BJ (cell line): ENCODE measurements at regions of chr9 and their contacts with region 1.

Region 1: DNA sequence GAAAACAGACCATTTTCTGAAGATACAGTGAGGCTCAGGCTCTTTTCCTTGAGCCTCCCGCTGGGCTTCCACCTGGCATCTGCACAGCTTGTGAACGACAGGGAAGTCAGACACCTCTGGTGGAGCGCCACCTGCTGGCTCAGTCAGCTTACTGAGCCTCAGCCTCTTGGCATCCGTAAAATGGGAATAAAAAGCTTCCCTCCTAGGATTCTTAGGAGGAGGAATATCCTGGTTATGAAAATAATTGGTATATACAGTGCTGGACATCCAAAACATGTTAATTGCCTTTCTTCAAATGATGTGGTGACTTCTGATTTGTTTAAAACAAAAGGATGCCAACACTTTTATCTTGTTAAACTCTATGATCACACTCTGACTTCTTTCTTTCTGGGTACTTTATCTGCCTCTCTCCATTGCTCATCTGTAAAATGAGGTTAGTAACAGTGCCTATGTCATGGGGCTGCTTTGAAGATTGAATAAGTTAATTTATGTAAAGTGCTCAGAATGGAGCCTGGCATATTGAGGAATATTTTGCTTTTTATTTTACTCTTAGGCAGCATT is 67.5 kb downstream of the MAMDC2 start:
- DNase-seq: no peak
- H3K4me3 ChIP-seq: no peak overlapping the region
- H3K27me3 ChIP-seq: no peaks in the 10 kb centered on the region
- CTCF ChIP-seq: peak; percentile 91

Region 2: DNA sequence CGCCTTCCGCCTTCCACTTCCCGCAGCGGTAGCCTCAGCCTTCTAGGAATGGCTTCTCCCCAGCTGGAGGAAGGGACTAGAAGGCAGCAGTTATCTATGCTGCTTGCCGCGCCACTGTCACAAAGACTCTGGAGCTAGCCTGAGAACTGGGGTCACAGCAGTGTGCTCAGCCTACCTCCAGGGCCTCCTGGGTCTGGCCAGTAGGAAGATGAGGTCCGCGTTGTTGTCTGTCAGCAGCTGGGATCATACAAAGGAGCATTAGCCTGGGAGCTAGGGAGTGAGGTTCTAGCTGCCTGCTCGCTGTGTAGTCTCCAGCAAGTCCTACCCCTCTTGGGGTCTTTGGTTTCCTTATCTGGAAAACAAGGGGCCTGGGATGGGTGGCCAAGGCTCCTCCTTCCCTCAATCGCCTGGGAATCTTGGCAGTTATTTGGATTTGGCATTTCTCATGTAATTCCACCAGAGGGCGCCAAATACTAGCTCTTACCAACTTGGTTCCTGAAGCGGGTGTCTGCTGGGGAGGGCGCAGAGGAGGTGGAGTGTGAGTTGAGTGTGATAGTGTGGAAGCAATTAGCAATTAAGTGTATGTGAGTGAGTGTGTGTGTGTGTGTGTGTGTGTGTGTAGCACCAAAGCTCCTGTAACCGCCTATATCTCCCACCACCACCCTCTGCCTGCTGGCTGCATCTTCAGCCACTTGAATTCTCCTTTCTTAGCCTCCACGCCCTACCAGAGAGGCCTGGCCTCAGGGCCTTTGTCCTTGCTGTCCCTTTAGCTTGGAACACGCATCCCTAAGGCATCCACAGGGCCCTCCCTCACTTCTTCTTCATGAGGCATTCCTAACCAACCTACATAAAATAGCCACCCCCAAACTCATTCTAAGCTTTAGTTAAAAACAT is 689.0 kb before region 1 on chr9:
- CTCF ChIA-PET with region 1: interaction called, 10 read pairs
- POLR2A ChIA-PET with region 1: no interaction called
- DNase-seq: peak; percentile 5
- H3K4me3 ChIP-seq: no peak overlapping the region
- H3K27me3 ChIP-seq: no peaks in the 10 kb centered on the region
- CTCF ChIP-seq: peak; percentile 65

Region 3: DNA sequence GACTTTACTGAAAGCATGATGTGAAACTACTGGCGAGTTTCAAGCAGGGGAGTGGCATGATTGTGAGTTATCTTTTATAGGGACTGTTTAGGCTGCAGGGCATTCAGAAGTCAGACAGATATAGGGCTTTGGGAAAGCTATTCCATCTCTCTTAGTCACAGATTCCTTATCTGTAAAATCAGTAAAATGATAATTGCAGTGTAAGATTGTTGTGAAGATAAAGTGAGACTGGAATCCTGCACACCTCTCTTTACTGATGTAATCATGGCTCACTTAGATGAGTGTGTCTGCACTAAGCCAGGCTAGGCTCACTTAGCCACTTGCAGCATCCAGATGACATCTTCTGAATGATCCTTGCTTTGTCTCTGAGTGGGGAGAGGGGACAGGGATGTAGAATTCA is 149.3 kb before region 1 on chr9:
- CTCF ChIA-PET with region 1: interaction called, 107 read pairs
- POLR2A ChIA-PET with region 1: no interaction called
- DNase-seq: peak; percentile 22
- H3K4me3 ChIP-seq: no peak overlapping the region
- H3K27me3 ChIP-seq: no peaks in the 10 kb centered on the region
- CTCF ChIP-seq: no peak

Region 4: DNA sequence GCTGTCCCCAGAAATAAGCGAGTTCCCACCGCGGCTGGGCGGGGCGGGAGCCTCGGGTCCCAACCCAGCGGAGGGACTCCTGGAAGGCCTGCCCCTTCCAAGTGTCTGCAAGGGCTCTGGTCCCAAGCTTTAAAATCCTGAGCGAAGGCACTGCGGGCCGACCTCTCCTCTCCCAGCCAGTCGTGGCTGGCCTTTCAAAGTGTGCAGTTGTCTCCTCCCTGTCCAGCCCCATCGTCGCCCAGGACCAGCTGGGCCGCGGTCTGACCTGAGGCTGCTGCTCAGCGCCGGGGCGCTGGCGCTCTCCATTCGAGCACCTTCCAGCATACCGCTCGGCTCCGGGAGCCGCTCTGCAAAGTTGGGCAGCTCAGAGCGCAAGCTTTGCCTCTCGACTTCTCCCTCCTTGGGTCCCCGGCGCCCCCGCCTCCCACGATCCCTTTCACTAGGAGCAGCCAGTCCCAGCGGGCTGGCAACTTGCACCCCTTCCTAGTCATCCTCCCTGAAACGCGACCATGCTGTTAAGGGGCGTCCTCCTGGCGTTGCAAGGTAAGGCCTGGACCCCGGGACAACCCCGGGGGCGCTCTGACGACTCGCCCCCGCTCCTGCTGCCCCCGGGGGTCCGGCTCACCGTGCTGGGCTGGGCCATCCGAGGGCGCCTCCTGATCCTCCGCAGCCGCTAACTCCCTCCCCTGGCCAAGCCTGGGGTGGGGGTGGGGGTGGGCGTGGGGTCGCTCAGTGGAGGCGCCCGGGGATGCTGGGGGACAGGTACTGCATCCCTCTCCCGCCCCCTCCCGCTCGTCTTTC is 67.2 kb before region 1 on chr9 and contains the start of gene MAMDC2:
- CTCF ChIA-PET with region 1: interaction called, 12 read pairs
- POLR2A ChIA-PET with region 1: interaction called, 4 read pairs
- DNase-seq: no peak
- H3K4me3 ChIP-seq: peak within 1 kb of the TSS; percentile 49
- H3K27me3 ChIP-seq: no peaks in the 10 kb centered on the region
- CTCF ChIP-seq: no peak
- polyA plus RNA-seq, gene MAMDC2: 28.0 and 35.8 TPM in 2 replicates

Region 5: GRCh38 chr9:70094747-70095146 is 16.4 kb before region 1 on chr9:
- CTCF ChIA-PET with region 1: interaction called, 14 read pairs
- POLR2A ChIA-PET with region 1: no interaction called
- DNase-seq: no peak
- H3K4me3 ChIP-seq: no peak overlapping the region
- H3K27me3 ChIP-seq: no peaks in the 10 kb centered on the region
- CTCF ChIP-seq: no peak

Region 6: GRCh38 chr9:70222354-70222753 is 111.2 kb after region 1 on chr9:
- CTCF ChIA-PET with region 1: interaction called, 6 read pairs
- POLR2A ChIA-PET with region 1: interaction called, 11 read pairs
- DNase-seq: no peak
- H3K4me3 ChIP-seq: no peak overlapping the region
- H3K27me3 ChIP-seq: no peaks in the 10 kb centered on the region
- CTCF ChIP-seq: no peak